ENCODE measurements at regions of chr6 and their contacts with region 1.

Region 1: GRCh38 chr6:137256350-137257103 is 37.3 kb upstream of the IFNGR1 start:
- DNase-seq: peak; percentile 17
- ATAC-seq: peak; percentile 74
- H3K4me3 ChIP-seq: no peak overlapping the region
- H3K27ac ChIP-seq: peak overlapping the region; percentile 28; the same call in 1 of the 2 replicates
- H3K4me1 ChIP-seq: peaks cover 12% of the 10 kb centered on the region
- H3K27me3 ChIP-seq: no peaks in the 10 kb centered on the region
- CTCF ChIP-seq: no peak

Region 2: DNA sequence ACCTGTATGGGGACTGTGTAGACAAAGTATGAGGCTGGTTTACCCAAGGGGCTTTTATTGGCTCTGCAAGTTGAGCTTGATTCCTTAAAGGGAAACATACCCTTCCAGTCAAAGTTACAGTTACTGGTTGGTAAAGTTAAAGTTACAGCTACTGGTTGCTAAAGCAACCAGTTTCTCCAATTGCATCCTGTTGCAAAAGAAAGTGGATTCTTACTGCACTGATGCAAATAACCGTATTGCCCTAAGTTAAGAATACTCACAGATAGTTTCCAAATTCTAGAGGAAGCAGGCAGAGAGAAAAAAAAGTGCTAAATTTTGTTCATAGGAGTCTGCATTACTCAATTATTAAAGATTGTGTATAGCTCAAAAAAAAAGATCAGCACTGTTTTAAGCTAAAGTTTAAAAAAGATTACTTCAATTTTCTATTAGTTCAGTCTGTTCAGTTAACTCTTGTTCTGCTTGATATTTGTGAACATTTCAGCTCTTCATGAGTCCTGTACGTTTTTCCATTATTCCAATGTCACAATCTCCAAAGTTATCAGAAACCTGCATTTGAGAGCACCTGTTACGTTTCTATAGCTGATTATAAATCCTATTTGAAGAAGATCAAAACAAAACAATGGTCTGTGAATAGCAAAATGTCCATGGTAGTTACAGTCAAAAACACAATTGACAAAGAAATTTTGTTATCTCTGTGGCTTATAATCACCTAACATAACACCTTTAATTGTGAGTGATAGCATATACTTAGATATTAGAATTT is 74.5 kb before region 1 on chr6:
- CTCF ChIA-PET with region 1: no interaction called
- POLR2A ChIA-PET with region 1: no interaction called
- intact Hi-C with region 1: no loop called
- DNase-seq: no peak
- ATAC-seq: no peak
- H3K4me3 ChIP-seq: no peak overlapping the region
- H3K27ac ChIP-seq: no peak overlapping the region
- H3K4me1 ChIP-seq: no peaks in the 10 kb centered on the region
- H3K27me3 ChIP-seq: no peaks in the 10 kb centered on the region
- CTCF ChIP-seq: no peak

Region 3: DNA sequence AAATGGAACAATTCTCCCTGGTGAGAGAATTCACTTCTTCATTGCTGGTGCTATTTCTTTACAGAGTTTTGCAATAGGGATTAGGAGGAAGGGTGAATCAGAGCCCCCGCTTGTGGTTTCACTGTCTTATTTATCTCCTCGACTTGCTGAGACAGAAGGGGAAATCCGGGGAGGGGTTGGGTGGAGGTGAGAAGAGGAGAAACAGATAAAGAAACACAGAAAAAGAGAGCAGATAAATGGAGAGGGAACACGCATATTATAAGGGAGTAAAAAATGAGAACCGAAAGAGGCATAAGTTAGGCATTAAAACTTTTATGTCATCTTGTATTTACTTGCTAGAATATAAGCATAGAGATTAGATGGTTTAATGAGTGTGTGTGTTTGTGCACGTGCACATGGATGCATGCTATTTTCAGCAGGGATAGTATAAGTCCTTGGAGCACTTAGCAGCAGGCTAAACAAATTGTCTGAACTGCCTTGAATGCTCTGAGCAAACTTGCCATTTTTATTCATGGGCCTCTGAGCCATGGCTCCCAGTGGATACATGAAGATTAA is 132.7 kb after region 1 on chr6:
- CTCF ChIA-PET with region 1: no interaction called
- POLR2A ChIA-PET with region 1: no interaction called
- intact Hi-C with region 1: no loop called
- DNase-seq: peak; percentile 9
- ATAC-seq: no peak
- H3K4me3 ChIP-seq: no peak overlapping the region
- H3K27ac ChIP-seq: no peak overlapping the region
- H3K4me1 ChIP-seq: no peaks in the 10 kb centered on the region
- H3K27me3 ChIP-seq: peaks cover 21% of the 10 kb centered on the region
- CTCF ChIP-seq: no peak

Region 4: GRCh38 chr6:137883400-137884148 is 627.0 kb after region 1 on chr6:
- CTCF ChIA-PET with region 1: no interaction called
- POLR2A ChIA-PET with region 1: interaction called, 18 read pairs
- intact Hi-C with region 1: no loop called
- DNase-seq: no peak
- ATAC-seq: no peak
- H3K4me3 ChIP-seq: no peak overlapping the region
- H3K27ac ChIP-seq: no peak overlapping the region
- H3K4me1 ChIP-seq: no peaks in the 10 kb centered on the region
- H3K27me3 ChIP-seq: no peaks in the 10 kb centered on the region
- CTCF ChIP-seq: no peak

Measured in PC-3 (cell line).